ENCODE measurements at regions of chr18 and their contacts with region 1.

Region 1: GRCh38 chr18:75773618-75774017 is 346.1 kb upstream of the SMIM21 start:
- DNase-seq: no peak
- H3K4me3 ChIP-seq: no peak overlapping the region
- H3K27ac ChIP-seq: no peak overlapping the region
- H3K4me1 ChIP-seq: no peaks in the 10 kb centered on the region
- H3K27me3 ChIP-seq: no peaks in the 10 kb centered on the region
- CTCF ChIP-seq: no peak
- EP300 ChIP-seq: no peak
- POLR2A ChIP-seq: no peak

Region 2: DNA sequence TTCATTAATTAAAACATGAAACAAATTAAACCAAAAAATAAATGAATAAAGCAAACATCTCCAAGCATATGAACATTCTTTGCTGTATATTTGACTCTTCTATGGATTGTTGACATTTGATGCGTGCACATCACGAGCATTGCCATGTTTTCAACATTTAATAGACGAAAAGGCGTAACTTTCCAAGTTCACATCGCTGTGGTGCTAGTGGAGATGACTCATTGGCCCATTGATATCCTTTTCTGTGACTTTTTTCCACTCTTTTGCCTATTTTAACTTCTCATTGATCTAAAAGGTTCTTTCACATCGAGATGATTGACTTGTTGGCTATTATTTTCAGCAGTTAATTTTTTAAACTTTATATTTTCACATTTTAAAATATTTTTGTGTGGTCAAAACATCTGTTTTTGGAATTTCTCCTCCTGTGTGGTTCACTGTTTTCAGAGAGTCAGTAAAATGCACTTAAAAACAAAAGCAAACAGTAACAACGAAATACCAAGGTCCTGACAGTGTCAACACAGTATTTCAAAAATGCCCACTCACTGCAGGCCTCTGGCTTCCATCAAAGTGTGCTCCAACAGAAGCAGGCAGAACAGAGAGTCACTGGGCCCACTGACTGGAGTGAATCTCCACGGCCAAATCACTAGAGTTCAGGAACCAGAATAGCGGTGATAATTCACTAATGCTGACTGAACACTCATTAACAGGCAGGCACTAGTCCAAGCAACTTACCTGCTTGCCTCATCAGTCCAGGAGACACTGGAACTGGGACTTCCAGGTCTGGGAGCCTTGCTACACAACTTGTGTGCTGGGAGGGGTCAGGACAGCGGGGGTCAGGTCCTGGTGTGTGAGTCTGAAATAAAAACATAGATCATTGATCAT is 26.1 kb after region 1 on chr18:
- intact Hi-C with region 1: no loop called
- DNase-seq: no peak
- H3K4me3 ChIP-seq: no peak overlapping the region
- H3K27ac ChIP-seq: no peak overlapping the region
- H3K4me1 ChIP-seq: peaks cover 2% of the 10 kb centered on the region
- H3K27me3 ChIP-seq: no peaks in the 10 kb centered on the region
- CTCF ChIP-seq: no peak
- EP300 ChIP-seq: no peak
- POLR2A ChIP-seq: no peak

Region 3: GRCh38 chr18:77470569-77471413 is 1697.2 kb after region 1 on chr18:
- intact Hi-C with region 1: loop called in 1 of 4 experiments (anchors 5 kb)
- DNase-seq: no peak
- H3K4me3 ChIP-seq: no peak overlapping the region
- H3K27ac ChIP-seq: no peak overlapping the region
- H3K4me1 ChIP-seq: no peaks in the 10 kb centered on the region
- H3K27me3 ChIP-seq: no peaks in the 10 kb centered on the region
- CTCF ChIP-seq: no peak
- EP300 ChIP-seq: no peak
- POLR2A ChIP-seq: no peak

Measured in ovary (tissue), 10 donors.